AG04449 (cell line): ENCODE measurements at regions of chr17 and their contacts with region 1.

Region 1: DNA sequence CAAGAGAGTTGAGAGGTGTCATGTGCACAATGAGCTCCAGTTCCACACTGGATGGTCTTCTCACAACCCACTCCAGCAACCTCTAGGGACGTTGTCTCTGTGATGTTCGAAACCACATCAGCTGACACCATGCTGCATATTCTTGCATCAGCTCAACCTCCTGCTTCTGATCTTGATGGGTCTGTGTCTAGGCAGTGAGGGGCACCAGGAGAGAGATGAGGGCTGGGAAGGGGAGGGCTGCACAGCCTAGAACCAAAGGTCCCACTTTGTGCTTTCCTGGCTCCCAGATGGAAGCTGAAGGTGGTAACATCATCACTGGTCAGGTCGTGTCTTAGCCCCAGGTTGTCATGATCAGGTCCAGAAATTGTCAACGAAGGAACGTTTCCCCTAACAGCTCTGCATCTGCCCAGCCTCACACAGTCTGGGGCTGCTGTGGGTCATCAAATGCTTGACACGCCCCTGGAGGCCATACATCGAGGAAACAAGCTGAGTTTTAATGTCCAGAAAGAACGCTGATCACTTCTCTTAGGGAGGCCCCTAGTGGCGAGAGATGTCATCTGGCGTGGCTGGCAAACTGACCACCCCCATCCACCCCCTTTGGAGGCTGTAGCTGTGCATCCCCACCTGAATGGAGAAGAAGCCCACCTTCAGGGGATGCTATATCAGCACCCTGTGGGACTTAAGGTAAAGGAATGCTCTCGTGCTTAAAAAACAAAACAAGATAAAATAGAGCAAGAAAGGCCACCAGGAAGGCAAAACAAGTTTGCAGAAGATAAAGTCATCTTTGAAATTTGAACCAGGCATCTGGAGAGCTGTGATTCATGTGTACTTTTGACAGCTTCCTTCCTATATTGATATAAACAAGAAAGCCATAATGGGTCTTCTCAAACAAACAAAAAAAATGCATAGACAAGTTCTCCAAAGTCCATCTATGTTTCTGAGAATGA is 58.3 kb downstream of the WIPI1 start:
- DNase-seq: peak; percentile 23
- H3K4me3 ChIP-seq: no peak overlapping the region
- CTCF ChIP-seq: peak; percentile 84

Region 2: DNA sequence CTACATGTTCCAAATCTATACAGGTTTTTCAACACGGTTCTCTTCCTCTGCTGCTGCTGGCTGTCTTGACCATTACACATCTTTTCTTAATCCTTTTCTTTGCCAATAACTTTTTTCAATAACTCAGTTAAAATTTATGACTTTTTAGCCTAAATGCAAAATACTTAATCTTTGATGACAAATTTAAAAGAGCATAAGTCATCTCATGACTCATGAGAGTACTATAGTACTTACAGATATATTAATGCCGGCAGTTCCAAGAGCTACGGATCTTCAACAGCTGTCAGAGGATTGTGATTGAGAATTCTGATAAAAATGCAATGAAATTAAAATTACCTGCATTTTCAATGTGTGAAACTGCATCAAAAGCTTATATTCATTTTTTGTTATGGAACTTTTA is 257.9 kb before region 1 on chr17:
- CTCF ChIA-PET with region 1: no interaction called
- POLR2A ChIA-PET with region 1: no interaction called
- DNase-seq: no peak
- H3K4me3 ChIP-seq: no peak overlapping the region
- CTCF ChIP-seq: no peak

Region 3: DNA sequence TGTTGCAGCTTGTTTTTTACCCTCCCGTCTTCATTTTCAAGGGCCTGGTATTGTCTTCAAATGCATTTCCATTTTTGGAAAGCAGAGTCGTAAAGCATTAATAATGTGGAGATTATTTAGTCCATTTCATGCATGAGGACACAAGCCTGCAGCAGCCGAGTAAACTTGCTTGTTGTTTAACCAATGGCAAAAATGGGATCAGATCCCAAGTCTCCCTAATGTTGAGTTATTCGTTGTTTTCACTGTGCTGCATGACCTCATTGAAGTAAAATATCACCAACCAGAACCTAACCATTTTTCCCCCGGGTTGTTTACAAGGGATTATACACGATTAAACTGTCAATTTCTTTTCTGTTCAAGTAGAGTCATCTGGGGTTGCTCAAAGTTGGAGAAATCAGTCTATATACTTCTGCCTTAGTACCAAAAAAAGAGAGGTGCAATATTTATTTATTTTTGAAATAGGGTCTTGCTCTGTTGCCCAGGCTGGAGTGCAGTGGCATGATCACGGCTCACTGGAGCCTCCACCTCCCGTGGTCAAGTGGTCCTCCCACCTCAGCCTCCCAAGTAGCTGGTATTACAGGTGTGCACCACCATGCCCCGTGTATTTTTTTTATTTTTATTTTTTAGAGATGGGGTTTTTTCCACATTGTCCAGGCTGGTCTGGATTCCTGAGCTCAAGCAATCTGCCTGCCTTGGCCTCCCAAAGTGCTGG is 138.8 kb before region 1 on chr17:
- CTCF ChIA-PET with region 1: interaction called, 121 read pairs
- POLR2A ChIA-PET with region 1: no interaction called
- DNase-seq: no peak
- H3K4me3 ChIP-seq: no peak overlapping the region
- CTCF ChIP-seq: no peak

Region 4: DNA sequence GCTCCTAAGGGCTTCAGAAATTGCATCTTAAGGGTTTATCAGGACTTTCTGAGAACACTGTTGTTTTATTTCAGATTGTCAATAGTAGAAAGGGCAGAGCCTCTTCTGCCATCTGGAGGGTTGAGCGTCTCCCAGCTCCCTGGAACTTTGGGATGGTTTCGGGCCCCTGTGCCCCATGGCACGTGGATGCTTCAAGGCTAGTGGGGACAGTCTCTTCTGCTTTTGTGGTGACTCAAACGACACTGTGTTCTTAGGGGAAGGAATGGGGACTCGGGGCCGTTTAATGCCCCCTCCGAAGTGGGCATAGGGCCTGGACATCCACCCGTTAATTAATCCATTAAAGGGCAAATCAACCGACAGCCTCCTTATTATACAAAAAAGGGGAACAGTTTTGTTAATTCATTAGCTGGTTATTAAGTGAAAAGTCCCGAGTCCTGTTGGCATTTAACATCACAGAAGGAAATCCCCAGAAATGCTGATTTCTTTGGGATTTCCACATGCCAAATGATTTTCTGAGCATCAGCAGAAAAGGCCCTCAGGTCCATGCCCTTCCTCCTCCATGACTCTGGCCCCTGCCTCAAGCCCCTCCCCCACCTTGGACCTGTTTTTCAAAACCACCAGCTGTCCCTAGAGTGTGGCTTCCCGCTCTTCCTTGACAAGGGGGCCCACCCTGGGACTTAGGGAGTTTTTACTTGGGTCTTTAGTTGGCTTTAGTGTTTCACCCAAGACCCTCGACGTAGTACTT is 39.0 kb before region 1 on chr17:
- CTCF ChIA-PET with region 1: interaction called, 22 read pairs
- POLR2A ChIA-PET with region 1: no interaction called
- DNase-seq: no peak
- H3K4me3 ChIP-seq: no peak overlapping the region
- CTCF ChIP-seq: no peak

Region 5: DNA sequence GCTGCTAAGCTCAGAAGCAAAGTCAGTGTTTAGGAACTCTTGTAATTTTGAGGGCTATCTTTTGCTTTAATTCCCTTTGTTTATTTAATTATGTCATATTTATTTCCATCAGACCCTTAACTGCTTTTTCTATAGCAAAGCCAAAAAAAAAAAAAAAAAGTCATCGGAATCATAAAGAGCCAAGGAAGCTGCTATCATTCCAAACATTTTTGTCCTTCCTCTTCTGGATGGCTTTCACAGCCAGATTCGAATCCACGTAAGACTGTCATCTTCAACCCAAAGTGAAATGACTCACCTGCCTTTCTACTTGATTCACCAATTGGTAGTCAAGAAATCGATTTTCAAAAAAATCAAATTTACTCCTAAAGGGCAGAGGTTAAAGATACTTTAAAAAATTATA is 19.9 kb after region 1 on chr17:
- CTCF ChIA-PET with region 1: interaction called, 31 read pairs
- POLR2A ChIA-PET with region 1: no interaction called
- DNase-seq: no peak
- H3K4me3 ChIP-seq: no peak overlapping the region
- CTCF ChIP-seq: no peak

Region 6: GRCh38 chr17:68441064-68441770 is 42.3 kb after region 1 on chr17:
- CTCF ChIA-PET with region 1: interaction called, 63 read pairs
- POLR2A ChIA-PET with region 1: no interaction called
- DNase-seq: no peak
- H3K4me3 ChIP-seq: no peak overlapping the region
- CTCF ChIP-seq: no peak